Activated CD4-positive, alpha-beta T cell treated with anti-CD3 and anti-CD28 coated beads, Interleukin-2, amount 10 ng/mL, durations not matched to agents 7 days and 5 days (primary cell): ENCODE measurements at regions of chr9 and their contacts with region 1.

Region 1: DNA sequence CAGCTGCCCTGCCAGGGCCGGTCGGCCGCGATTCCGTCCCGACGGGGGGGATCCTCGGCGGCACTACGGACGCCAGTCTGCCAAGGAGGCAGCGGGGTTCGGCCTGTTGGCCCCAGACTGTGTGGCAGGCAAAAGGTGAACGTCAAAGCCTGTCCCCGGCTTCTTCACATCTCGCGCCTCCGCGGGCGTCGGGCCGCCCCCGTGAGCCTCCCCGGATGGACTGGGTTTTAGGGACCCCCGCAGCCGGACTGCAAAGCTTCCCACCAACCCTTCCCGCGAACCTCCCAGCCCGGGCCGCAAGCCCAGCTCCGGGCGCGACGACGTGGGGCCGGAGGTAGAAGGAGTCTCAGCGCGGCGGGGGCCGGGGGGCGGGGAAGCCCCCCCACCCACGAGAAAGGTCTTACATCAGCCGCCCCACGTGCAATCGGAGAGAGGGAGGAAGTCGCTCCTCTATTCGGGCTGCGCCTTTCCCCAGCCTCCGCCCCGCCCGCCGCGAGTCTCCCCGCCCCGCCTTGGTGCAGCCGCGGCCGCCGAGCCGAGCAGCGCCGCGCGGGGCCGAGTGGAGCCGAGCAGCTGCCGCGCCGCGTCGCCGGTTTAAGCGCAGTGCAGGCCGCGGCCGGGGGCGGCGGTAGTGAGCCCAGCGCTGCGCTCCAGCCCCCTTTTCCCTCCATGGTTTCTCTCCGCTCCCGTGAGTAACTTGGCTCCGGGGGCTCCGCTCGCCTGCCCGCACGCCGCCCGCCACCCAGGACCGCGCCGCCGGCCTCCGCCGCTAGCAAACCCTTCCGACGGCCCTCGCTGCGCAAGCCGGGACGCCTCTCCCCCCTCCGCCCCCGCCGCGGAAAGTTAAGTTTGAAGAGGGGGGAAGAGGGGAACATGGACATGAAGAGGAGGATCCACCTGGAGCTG is at the start of gene ANP32B:
- DNase-seq: peak; percentile 95
- H3K4me3 Mint-ChIP-seq: peak within 1 kb of the TSS; percentile 83
- H3K27ac Mint-ChIP-seq: peak within 1 kb of the TSS; percentile 95
- H3K4me1 Mint-ChIP-seq: peaks cover 49% of the 10 kb centered on the region
- H3K27me3 Mint-ChIP-seq: no peaks in the 10 kb centered on the region
- total RNA-seq, gene ANP32B: 358 to 453 TPM

Region 2: GRCh38 chr9:97958812-97959511 is 24.0 kb before region 1 on chr9:
- CTCF ChIA-PET with region 1: interaction called, 10 read pairs
- POLR2A ChIA-PET with region 1: no interaction called
- DNase-seq: no peak
- H3K4me3 Mint-ChIP-seq: no peak overlapping the region
- H3K27ac Mint-ChIP-seq: no peak overlapping the region
- H3K4me1 Mint-ChIP-seq: peaks cover 4% of the 10 kb centered on the region
- H3K27me3 Mint-ChIP-seq: peaks cover 3% of the 10 kb centered on the region

Region 3: GRCh38 chr9:97966493-97966892 is 16.4 kb before region 1 on chr9:
- CTCF ChIA-PET with region 1: interaction called, 19 read pairs
- POLR2A ChIA-PET with region 1: no interaction called
- DNase-seq: no peak
- H3K4me3 Mint-ChIP-seq: no peak overlapping the region
- H3K27ac Mint-ChIP-seq: no peak overlapping the region
- H3K4me1 Mint-ChIP-seq: peaks cover 9% of the 10 kb centered on the region
- H3K27me3 Mint-ChIP-seq: peaks cover 11% of the 10 kb centered on the region

Region 4: GRCh38 chr9:97972753-97973152 is 10.2 kb before region 1 on chr9:
- CTCF ChIA-PET with region 1: interaction called, 19 read pairs
- POLR2A ChIA-PET with region 1: no interaction called
- DNase-seq: no peak
- H3K4me3 Mint-ChIP-seq: no peak overlapping the region
- H3K27ac Mint-ChIP-seq: no peak overlapping the region
- H3K4me1 Mint-ChIP-seq: peaks cover 9% of the 10 kb centered on the region
- H3K27me3 Mint-ChIP-seq: peaks cover 8% of the 10 kb centered on the region

Region 5: DNA sequence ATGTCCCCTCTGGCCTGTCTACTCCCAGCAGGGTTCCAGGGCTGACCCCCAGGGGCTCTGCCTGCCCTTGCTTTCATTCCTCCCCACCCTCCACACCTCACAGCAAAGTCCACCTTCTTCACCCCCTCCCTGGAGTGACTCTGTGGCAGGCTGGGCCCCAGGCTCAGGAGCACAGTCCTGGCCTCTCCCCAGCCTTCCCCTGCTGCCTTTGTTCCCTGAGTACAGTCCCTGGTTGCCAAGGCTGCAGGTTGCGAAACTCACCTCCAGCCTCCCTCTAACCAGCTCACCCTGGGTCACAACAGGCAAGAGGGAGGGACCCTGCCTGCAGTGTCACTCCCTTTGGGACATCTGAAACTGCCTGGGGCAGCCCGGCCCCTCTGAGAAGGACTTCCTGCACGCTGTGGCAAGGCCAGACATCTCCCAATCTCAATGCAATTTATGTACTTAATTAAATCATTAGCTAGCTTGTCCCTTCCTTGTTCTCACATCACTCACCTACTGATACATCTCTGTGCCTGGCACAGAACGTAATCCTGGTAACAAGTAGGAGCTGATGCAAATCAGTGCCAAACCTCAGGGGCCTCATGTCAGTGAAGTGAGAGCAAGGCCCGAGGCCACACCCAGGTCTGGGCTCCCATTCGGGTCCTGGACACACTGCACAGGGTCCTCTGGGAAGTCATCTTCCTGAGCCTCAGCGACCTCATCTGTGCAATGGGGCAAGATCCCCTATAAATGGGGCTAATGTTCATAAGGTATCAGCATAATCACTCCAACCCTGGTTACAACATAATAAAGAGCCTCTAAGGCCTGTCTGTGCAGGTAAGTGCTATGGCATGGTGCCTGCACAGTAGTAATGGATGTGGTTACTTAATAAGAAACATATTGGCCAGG is 163.4 kb after region 1 on chr9:
- CTCF ChIA-PET with region 1: no interaction called
- POLR2A ChIA-PET with region 1: no interaction called
- DNase-seq: no peak
- H3K4me3 Mint-ChIP-seq: no peak overlapping the region
- H3K27ac Mint-ChIP-seq: no peak overlapping the region
- H3K4me1 Mint-ChIP-seq: peaks cover 2% of the 10 kb centered on the region
- H3K27me3 Mint-ChIP-seq: no peaks in the 10 kb centered on the region

Region 6: DNA sequence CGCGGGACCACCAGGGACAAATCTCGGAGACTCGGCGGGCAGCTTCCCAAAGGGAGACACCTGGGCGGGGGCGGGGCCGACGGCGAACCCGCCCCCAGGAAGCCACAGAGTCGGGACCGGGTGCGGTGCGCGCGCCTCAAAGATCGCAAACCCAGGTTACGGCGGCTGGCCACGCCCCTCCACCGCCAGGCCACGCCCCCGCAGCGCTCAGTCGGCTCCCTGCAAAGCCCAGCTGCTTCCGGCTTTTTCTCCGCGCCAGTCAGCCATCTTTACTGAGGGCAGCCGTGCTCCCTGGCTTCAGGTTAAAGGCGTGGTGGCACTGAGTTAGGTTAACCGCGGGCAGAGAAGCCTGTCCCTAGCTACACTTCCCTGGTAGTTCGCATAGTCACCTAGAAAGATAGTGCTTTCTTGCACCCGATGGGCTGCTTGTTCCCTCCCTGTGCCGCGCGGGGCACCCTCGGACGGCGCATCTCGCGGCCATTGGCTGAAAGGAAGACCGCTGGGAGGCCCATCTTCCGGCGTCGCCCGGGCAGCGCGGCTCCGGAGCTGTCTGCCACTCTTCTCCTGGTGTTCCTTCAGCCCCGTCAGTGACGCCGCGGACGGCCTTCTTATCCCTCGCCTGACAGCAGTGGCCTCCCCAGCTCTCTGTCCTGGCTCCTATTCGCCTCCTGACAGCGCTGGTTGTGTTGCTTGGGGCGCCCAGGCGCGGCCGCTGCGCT is 272.8 kb after region 1 on chr9 and contains the start of gene TBC1D2:
- CTCF ChIA-PET with region 1: interaction called, 12 read pairs
- POLR2A ChIA-PET with region 1: no interaction called
- DNase-seq: peak; percentile 97
- H3K4me3 Mint-ChIP-seq: peak within 1 kb of the TSS; percentile 90
- H3K27ac Mint-ChIP-seq: peak within 1 kb of the TSS; percentile 98
- H3K4me1 Mint-ChIP-seq: peaks cover 33% of the 10 kb centered on the region
- H3K27me3 Mint-ChIP-seq: no peaks in the 10 kb centered on the region
- total RNA-seq, gene TBC1D2: 8.3 to 8.7 TPM